SK-N-SH (cell line): ENCODE measurements at regions of chr7 and their contacts with region 1.

Region 1: GRCh38 chr7:91228927-91229558 is 35.2 kb upstream of the FZD1 start:
- DNase-seq: no peak
- H3K4me3 ChIP-seq: no peak overlapping the region
- H3K27ac ChIP-seq: peak overlapping the region in 1 of 2 experiments; percentile 37; a peak in 1 of 4 replicates
- H3K4me1 ChIP-seq: peaks cover 3 to 21% of the 10 kb centered on the region in 2 experiments; a peak in 2 of 4 replicates
- H3K27me3 ChIP-seq: no peaks in the 10 kb centered on the region
- CTCF ChIP-seq: no peak
- EP300 ChIP-seq: no peak
- RAD21 ChIP-seq: no peak

Region 2: DNA sequence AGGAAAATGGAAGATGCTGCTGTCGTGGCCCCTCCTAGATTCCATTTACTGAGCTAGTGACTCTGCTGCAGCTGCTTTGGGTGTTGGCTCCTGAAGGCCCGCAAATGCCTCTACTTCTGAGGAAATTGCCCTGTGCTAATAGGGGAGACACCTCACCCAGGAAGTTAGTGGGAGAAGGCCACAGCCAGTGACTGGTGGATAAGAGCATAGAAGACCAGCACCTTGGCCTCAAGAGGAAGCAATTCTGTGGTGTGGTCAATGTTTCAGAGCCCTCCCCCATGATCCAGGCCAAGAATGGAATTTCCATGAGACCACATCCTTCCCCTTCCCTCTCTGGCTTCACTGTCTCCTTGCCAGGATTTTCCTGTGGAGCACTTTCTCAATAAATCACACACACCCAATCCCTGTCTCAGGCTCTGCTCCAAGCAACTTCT is 10.1 kb after region 1 on chr7:
- CTCF ChIA-PET with region 1: interaction called, 13 read pairs
- POLR2A ChIA-PET with region 1: no interaction called
- DNase-seq: no peak
- H3K4me3 ChIP-seq: no peak overlapping the region
- H3K27ac ChIP-seq: no peak overlapping the region
- H3K4me1 ChIP-seq: peaks cover 5 to 6% of the 10 kb centered on the region in 2 experiments; a peak in 2 of 4 replicates
- H3K27me3 ChIP-seq: no peaks in the 10 kb centered on the region
- CTCF ChIP-seq: no peak
- EP300 ChIP-seq: no peak
- RAD21 ChIP-seq: no peak